CD14-positive monocyte (primary cell): ENCODE measurements at regions of chr14 and their contacts with region 1.

Region 1: DNA sequence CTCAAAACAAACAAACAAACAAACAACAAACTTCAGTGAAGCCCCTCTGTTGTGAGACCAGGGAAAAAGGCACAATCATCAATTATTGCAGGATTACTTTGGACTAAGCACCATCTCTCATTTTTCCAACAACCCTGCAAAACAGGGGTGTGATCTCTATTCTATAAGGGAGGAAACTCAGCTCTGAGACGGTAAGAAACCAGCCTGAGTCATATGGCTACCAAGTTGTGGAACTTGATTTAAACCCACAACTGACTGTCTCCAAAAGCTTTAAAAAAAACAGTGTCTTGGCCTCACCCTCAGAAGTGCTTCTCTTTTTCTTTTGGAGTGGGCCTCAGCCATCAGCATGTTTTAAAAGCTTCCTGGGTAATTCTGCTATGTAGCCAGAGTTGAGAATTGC is 49.8 kb downstream of the RIN3 start:
- DNase-seq: peak; percentile 59 to 73 (median 68)
- H3K4me3 ChIP-seq: no peak overlapping the region
- H3K4me3 Mint-ChIP-seq: no peak overlapping the region
- H3K27ac ChIP-seq: peak overlapping the region; percentile 34 to 71
- H3K27ac Mint-ChIP-seq: peak overlapping the region; percentile 58 to 90 (median 82)
- H3K4me1 ChIP-seq: peaks cover 31 to 38% of the 10 kb centered on the region in 2 donors
- H3K4me1 Mint-ChIP-seq: peaks cover 38% of the 10 kb centered on the region
- H3K27me3 ChIP-seq: no peaks in the 10 kb centered on the region
- H3K27me3 Mint-ChIP-seq: peaks cover 0 to 5% (median 0%) of the 10 kb centered on the region in 3 donors
- CTCF ChIP-seq: no peak

Region 2: GRCh38 chr14:92495035-92495434 is 68.3 kb before region 1 on chr14:
- intact Hi-C with region 1: no loop called
- DNase-seq: peak; percentile 93 to 99 (median 98)
- H3K4me3 ChIP-seq: peak overlapping the region in 1 of 3 experiments; percentile 29
- H3K4me3 Mint-ChIP-seq: peak overlapping the region in 1 of 2 donors; percentile 35
- H3K27ac ChIP-seq: peak overlapping the region; percentile 46 to 97
- H3K27ac Mint-ChIP-seq: peak overlapping the region; percentile 93 to 99 (median 98)
- H3K4me1 ChIP-seq: peaks cover 63 to 74% of the 10 kb centered on the region in 2 donors
- H3K4me1 Mint-ChIP-seq: peaks cover 68% of the 10 kb centered on the region
- H3K27me3 ChIP-seq: no peaks in the 10 kb centered on the region
- H3K27me3 Mint-ChIP-seq: peaks cover 0 to 11% (median 6%) of the 10 kb centered on the region in 3 donors
- CTCF ChIP-seq: no peak

Region 3: DNA sequence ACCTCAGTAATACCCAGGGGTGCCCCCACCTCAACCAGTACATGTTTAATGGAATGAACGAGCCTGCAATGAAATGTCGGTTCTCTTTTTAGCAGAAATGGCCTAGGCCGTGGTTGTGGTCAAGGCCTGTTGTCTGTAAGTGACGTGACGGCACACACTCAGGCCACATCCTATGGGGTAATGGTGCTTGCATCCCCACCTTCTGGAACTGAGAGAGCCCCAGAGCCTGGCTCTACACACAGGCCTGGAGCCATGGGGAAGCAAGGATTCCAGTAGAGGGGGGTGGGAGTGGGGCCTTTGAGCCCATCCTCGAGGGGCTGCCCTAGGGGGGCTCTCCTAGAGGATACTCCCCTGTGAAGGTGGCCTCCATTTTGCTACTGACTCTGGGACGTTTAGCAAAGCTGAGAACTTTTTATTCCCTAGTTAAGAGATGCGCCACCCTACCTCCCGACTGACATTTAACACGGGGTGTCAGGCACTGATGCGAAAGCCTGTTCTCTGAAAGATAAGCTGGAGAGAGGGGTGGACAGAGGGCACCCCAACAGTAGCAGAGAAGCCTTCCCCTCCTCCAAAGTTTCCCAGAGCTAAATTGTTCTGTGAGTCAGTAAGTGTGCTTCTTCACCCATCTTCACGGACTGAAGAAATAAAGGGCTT is 43.1 kb before region 1 on chr14:
- intact Hi-C with region 1: loop called in 1 of 2 experiments (anchors 1 kb)
- DNase-seq: peak; percentile 54 to 77 (median 69)
- H3K4me3 ChIP-seq: peak overlapping the region in 1 of 3 experiments; percentile 12
- H3K4me3 Mint-ChIP-seq: peak overlapping the region in 1 of 2 donors; percentile 39
- H3K27ac ChIP-seq: peak overlapping the region; percentile 2 to 75
- H3K27ac Mint-ChIP-seq: peak overlapping the region; percentile 62 to 92 (median 85)
- H3K4me1 ChIP-seq: peaks cover 52 to 88% of the 10 kb centered on the region in 2 donors
- H3K4me1 Mint-ChIP-seq: peaks cover 94% of the 10 kb centered on the region
- H3K27me3 ChIP-seq: no peaks in the 10 kb centered on the region
- H3K27me3 Mint-ChIP-seq: peaks cover 8 to 15% (median 12%) of the 10 kb centered on the region in 3 donors
- CTCF ChIP-seq: no peak

Region 4: DNA sequence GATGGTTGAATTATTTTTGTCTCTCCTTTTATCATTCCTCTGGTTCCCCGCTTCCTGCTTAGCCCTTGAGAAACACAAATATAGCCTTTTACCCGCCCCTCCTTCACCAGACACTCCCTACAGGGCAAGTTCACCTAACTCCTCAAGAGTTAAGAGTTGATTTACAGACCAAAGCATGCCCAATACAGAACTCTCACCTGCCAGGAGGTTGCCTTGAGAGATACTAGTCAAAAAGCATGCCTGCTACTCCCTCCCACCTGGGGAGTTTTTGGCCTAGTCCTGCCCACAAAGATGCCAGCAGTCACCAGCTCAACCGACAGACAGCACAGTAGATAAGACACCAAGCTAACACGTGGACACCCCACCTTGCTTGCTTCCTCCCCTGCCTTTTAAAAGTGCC is 173.8 kb after region 1 on chr14:
- intact Hi-C with region 1: no loop called
- DNase-seq: no peak
- H3K4me3 ChIP-seq: no peak overlapping the region
- H3K4me3 Mint-ChIP-seq: no peak overlapping the region
- H3K27ac ChIP-seq: no peak overlapping the region
- H3K27ac Mint-ChIP-seq: no peak overlapping the region
- H3K4me1 ChIP-seq: no peaks in the 10 kb centered on the region
- H3K4me1 Mint-ChIP-seq: no peaks in the 10 kb centered on the region
- H3K27me3 ChIP-seq: peaks cover 0 to 7% of the 10 kb centered on the region in 2 donors
- H3K27me3 Mint-ChIP-seq: peaks cover 0 to 44% (median 35%) of the 10 kb centered on the region in 3 donors
- CTCF ChIP-seq: no peak